ENCODE measurements at regions of chr16 and their contacts with region 1.

Region 1: GRCh38 chr16:87062569-87063442 is 254.4 kb downstream of the C16orf95 start:
- DNase-seq: peak; percentile 50 to 73 (median 59)
- H3K4me3 ChIP-seq: no peak overlapping the region
- H3K27ac ChIP-seq: no peak overlapping the region
- H3K4me1 ChIP-seq: no peaks in the 10 kb centered on the region
- H3K27me3 ChIP-seq: no peaks in the 10 kb centered on the region
- CTCF ChIP-seq: peak; percentile 31 to 47 (median 34)
- EP300 ChIP-seq: no peak
- POLR2A ChIP-seq: no peak

Region 2: DNA sequence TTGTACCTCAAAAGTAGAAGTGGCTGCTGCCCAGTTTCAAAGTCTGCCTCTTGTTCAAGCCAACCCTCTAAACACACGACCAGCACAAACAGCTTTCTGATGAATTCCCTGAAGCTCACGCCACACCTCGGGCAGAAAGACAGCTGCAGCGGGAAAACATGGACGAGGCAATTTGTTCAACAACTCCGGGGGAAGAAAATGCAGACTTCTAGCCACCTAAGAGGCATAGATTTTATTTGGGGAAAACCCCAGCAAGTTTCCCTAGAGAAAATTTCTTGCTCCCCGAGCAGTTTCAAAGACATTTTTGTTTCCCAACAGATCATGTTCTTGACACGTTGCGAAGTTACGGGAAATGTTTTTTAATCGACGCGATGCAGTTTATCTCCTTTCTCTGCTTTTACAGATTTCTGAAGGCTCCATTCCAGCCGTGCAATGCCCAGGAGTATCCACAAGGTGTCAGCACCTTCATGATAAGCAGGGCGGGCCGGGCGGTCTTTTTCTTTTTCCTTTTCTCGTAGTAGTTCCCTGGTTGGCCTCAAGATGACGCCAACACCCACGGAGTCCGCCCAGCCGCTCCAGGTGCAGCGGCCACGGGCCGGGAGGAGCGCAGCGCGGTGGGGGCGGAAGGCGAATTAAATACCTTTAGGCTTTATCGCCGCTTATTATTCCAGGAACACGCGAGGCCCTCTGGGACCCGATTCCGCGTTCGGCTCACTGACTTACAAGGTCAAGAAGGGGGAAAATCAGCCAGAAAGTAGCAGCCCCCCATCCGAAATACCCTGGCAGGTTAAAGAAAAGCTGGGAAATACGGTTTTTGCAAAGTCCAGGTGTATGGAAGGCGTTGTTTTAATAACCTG is 499.1 kb before region 1 on chr16:
- intact Hi-C with region 1: loop called in 3 of 4 experiments (anchors 5 to 10 kb)
- DNase-seq: peak; percentile 74 to 93 (median 86)
- H3K4me3 ChIP-seq: peak overlapping the region; percentile 9
- H3K27ac ChIP-seq: no peak overlapping the region
- H3K4me1 ChIP-seq: peaks cover 4% of the 10 kb centered on the region
- H3K27me3 ChIP-seq: no peaks in the 10 kb centered on the region
- CTCF ChIP-seq: peak; percentile 98
- EP300 ChIP-seq: no peak
- POLR2A ChIP-seq: no peak

Region 3: GRCh38 chr16:86570558-86571529 is 492.0 kb before region 1 on chr16:
- intact Hi-C with region 1: loop called (anchors 5 to 10 kb)
- DNase-seq: no peak
- H3K4me3 ChIP-seq: no peak overlapping the region
- H3K27ac ChIP-seq: no peak overlapping the region
- H3K4me1 ChIP-seq: peaks cover 4% of the 10 kb centered on the region
- H3K27me3 ChIP-seq: peaks cover 2% of the 10 kb centered on the region
- CTCF ChIP-seq: no peak
- EP300 ChIP-seq: no peak
- POLR2A ChIP-seq: no peak

Region 4: DNA sequence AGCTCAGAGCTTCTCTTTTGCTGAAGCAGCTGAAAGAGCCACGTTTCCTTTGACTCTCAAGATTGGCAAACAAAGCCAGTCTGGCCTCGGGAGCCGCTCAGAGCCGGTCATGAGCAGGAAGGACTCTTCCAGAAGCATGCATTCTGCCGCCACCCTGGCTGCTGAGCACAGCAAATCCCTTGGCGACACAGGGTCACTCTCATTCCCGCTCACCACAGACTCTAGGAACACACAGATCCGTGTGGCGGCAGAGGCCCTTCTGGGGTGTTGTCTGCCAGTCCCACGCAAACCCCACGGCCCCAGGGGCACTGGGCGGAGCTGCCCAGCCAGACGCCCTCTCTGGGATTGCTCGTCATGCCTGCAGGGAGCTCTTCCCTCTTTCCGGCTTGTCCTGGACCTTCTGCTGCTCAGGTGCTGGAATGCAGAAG is 97.4 kb after region 1 on chr16:
- intact Hi-C with region 1: no loop called
- DNase-seq: no peak
- H3K4me3 ChIP-seq: no peak overlapping the region
- H3K27ac ChIP-seq: no peak overlapping the region
- H3K4me1 ChIP-seq: no peaks in the 10 kb centered on the region
- H3K27me3 ChIP-seq: no peaks in the 10 kb centered on the region
- CTCF ChIP-seq: no peak
- EP300 ChIP-seq: no peak
- POLR2A ChIP-seq: no peak

Region 5: GRCh38 chr16:87387942-87388817 is 325.4 kb after region 1 on chr16:
- intact Hi-C with region 1: no loop called
- DNase-seq: peak; percentile 86 to 95 (median 91)
- H3K4me3 ChIP-seq: peak overlapping the region; percentile 24
- H3K27ac ChIP-seq: peak overlapping the region; percentile 49 to 89
- H3K4me1 ChIP-seq: peaks cover 5% of the 10 kb centered on the region
- H3K27me3 ChIP-seq: no peaks in the 10 kb centered on the region
- CTCF ChIP-seq: peak in 1 of 3 donors; percentile 16
- EP300 ChIP-seq: peak; percentile 94
- POLR2A ChIP-seq: peak; percentile 67

Measured in ovary (tissue), 10 donors.